Activated CD4-positive, alpha-beta T cell treated with anti-CD3 and anti-CD28 coated beads for 36 hours (primary cell): ENCODE measurements at regions of chr7 and their contacts with region 1.

Region 1: DNA sequence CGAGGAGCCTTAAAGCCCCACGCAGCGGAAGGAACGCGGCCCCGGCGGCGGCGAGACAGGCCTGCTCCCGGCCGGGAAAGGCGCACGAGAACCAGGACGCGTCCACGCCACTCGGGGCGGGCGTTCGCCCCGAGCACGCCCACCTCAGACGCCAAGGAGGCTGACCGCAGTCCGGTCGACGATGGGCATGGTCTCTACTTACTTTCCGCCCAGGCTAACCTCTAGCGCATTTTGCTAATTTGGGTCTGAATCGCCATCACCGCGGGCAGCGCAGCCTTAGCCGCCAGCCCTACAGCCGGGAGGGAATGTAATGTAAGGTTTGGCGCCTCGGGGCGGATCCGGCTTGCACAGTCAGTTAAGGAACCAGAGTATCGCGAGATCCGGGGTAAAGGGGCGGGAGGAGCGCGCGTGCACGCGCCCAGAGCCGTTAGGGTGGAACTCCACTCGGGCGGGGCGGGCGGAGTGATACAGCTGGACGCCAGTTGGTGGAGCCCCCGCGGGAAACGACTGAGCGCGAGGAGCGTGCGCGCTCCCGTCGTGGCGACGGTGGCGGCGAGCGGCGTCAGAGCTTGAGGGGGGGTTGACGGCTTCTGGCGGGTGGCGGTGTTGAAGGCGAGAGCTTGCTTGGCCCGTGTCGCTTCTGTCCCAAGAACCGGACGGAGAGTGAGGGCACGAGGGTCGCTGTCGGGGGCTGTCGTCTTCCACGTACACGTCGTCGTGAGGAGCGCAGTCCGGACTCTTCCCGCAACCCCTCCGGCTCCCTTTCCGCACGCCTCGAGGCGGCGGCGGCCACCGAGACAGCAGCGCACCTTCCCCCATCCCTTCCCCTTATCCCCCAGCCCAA is at the start of gene LUC7L2:
- DNase-seq: peak; percentile 100
- ATAC-seq: peak; percentile 75
- H3K4me3 Mint-ChIP-seq: peak within 1 kb of the TSS; percentile 99
- H3K27ac Mint-ChIP-seq: peak within 1 kb of the TSS; percentile 98
- H3K4me1 Mint-ChIP-seq: peaks cover 25% of the 10 kb centered on the region
- H3K27me3 Mint-ChIP-seq: no peaks in the 10 kb centered on the region
- total RNA-seq, gene LUC7L2: 124 to 126 TPM

Region 2: DNA sequence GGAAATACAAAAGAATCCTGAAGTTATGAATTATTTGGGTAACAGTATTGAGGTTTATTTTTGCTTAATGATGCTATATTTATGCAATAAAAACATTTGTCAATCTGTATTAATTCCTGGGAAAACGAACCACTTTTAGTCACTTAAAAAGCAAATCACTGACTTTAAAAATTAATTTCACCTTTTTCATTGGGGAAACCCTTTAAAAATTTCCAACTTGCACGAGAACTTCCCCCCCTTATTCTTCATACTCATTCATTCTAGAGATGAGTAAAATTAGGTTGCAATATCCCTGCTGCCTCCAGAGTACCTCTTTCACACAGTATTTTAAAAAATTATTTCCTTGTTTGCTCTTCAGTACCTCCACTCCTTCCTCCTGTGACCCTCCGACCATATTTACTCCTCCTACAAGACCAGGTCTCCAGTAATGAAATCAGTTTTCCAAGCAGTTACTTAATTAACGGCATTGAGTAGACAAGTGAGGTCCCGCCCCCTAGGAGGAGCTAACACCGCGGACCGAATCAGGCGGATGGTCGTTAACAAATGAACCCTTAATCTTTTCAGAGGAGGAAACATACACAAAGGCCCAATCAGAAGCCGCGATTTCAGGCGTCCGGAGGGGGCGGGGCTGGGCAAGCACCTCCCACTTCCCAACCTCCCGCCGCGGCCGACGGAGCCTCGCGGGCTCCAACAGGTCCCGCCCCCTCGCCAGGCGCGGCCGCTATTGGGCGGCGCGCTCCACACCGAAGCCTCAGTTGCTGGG is 900.0 kb before region 1 on chr7:
- CTCF ChIA-PET with region 1: no interaction called
- POLR2A ChIA-PET with region 1: no interaction called
- intact Hi-C with region 1: loop called (anchors 1 to 5 kb)
- DNase-seq: peak; percentile 99
- ATAC-seq: peak; percentile 88
- H3K4me3 Mint-ChIP-seq: peak overlapping the region; percentile 85
- H3K27ac Mint-ChIP-seq: peak overlapping the region; percentile 85
- H3K4me1 Mint-ChIP-seq: peaks cover 25% of the 10 kb centered on the region
- H3K27me3 Mint-ChIP-seq: no peaks in the 10 kb centered on the region

Region 3: DNA sequence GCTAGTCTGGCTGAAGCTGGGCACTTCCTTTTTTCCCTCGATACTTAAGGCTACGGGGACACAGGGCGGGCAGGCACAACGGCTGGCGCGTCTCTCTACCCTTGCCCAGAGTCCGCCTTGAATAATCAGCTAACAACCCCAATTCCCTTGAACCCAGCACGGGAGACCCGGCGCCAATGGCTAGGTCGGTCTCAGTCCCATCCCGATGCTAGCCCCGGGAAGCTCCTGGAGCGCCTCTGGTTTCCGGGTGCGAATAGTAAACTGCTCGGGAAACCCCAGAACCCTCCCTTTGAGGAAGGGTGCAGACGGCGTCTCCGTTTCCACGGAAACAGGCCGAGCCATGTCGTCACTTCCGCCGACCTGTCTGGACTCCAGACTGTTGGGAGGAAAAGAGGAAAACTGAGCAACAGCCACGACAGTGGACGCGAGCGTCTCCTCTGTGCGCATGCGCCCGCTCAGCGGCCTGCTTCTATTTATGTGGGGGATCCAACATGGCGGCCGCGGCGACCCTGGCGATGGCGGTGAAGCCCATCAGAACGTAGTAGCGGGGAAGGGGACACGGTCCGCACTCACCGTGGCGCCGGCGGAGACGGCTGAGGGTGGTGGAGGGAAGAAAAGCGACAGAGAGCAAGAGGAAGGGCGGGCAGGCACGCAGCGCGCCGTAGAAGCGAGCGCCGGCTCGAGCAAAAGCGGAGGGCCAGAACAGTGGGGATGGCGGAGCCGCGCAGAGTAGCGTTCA is 128.6 kb before region 1 on chr7 and contains the start of gene UBN2:
- CTCF ChIA-PET with region 1: no interaction called
- POLR2A ChIA-PET with region 1: no interaction called
- intact Hi-C with region 1: loop called (anchors 1 kb)
- DNase-seq: peak; percentile 96
- ATAC-seq: peak; percentile 88
- H3K4me3 Mint-ChIP-seq: peak within 1 kb of the TSS; percentile 98
- H3K27ac Mint-ChIP-seq: peak within 1 kb of the TSS; percentile 93
- H3K4me1 Mint-ChIP-seq: peaks cover 20% of the 10 kb centered on the region
- H3K27me3 Mint-ChIP-seq: peaks cover 3% of the 10 kb centered on the region
- total RNA-seq, gene UBN2: 8.3 to 11.8 TPM

Region 4: GRCh38 chr7:139242741-139243281 is 116.8 kb before region 1 on chr7:
- CTCF ChIA-PET with region 1: no interaction called
- POLR2A ChIA-PET with region 1: no interaction called
- intact Hi-C with region 1: no loop called
- DNase-seq: no peak
- ATAC-seq: peak; percentile 87
- H3K4me3 Mint-ChIP-seq: no peak overlapping the region
- H3K27ac Mint-ChIP-seq: no peak overlapping the region
- H3K4me1 Mint-ChIP-seq: peaks cover 8% of the 10 kb centered on the region
- H3K27me3 Mint-ChIP-seq: no peaks in the 10 kb centered on the region

Region 5: GRCh38 chr7:139374246-139374645 is 14.7 kb after region 1 on chr7:
- CTCF ChIA-PET with region 1: interaction called, 11 read pairs
- POLR2A ChIA-PET with region 1: interaction called, 7 read pairs
- intact Hi-C with region 1: loop called in 1 of 2 experiments (anchors 1 kb)
- DNase-seq: no peak
- ATAC-seq: no peak
- H3K4me3 Mint-ChIP-seq: no peak overlapping the region
- H3K27ac Mint-ChIP-seq: no peak overlapping the region
- H3K4me1 Mint-ChIP-seq: peaks cover 55% of the 10 kb centered on the region
- H3K27me3 Mint-ChIP-seq: no peaks in the 10 kb centered on the region

Region 6: GRCh38 chr7:139915864-139916716 is 556.5 kb after region 1 on chr7:
- CTCF ChIA-PET with region 1: no interaction called
- POLR2A ChIA-PET with region 1: no interaction called
- intact Hi-C with region 1: loop called in 1 of 2 experiments (anchors 5 kb)
- DNase-seq: peak; percentile 83
- ATAC-seq: peak; percentile 95
- H3K4me3 Mint-ChIP-seq: peak overlapping the region; percentile 35
- H3K27ac Mint-ChIP-seq: peak overlapping the region; percentile 52
- H3K4me1 Mint-ChIP-seq: peaks cover 25% of the 10 kb centered on the region
- H3K27me3 Mint-ChIP-seq: peaks cover 3% of the 10 kb centered on the region

Region 7: GRCh38 chr7:140230861-140231770 is 871.5 kb after region 1 on chr7:
- CTCF ChIA-PET with region 1: no interaction called
- POLR2A ChIA-PET with region 1: no interaction called
- intact Hi-C with region 1: loop called in 1 of 2 experiments (anchors 2 kb)
- DNase-seq: peak; percentile 86
- ATAC-seq: peak; percentile 65
- H3K4me3 Mint-ChIP-seq: peak overlapping the region; percentile 99
- H3K27ac Mint-ChIP-seq: peak overlapping the region; percentile 99
- H3K4me1 Mint-ChIP-seq: peaks cover 45% of the 10 kb centered on the region
- H3K27me3 Mint-ChIP-seq: no peaks in the 10 kb centered on the region

Region 8: GRCh38 chr7:140673063-140673773 is 1313.6 kb after region 1 on chr7:
- CTCF ChIA-PET with region 1: no interaction called
- POLR2A ChIA-PET with region 1: interaction called, 3 read pairs
- intact Hi-C with region 1: loop called in 1 of 2 experiments (anchors 10 kb)
- DNase-seq: peak; percentile 72
- ATAC-seq: peak; percentile 74
- H3K4me3 Mint-ChIP-seq: peak overlapping the region; percentile 85
- H3K27ac Mint-ChIP-seq: peak overlapping the region; percentile 87
- H3K4me1 Mint-ChIP-seq: peaks cover 35% of the 10 kb centered on the region
- H3K27me3 Mint-ChIP-seq: no peaks in the 10 kb centered on the region